B cell (primary cell): ENCODE measurements at regions of chr17 and their contacts with region 1.

Region 1: GRCh38 chr17:18141210-18141803 is 32.8 kb downstream of the MYO15A start:
- DNase-seq: peak; percentile 77
- ATAC-seq: peak; percentile 75
- H3K4me3 ChIP-seq: no peak overlapping the region
- H3K4me3 Mint-ChIP-seq: no peak overlapping the region
- H3K27ac ChIP-seq: no peak overlapping the region
- H3K27ac Mint-ChIP-seq: no peak overlapping the region
- H3K4me1 ChIP-seq: peaks cover 0 to 4% of the 10 kb centered on the region in 2 donors
- H3K4me1 Mint-ChIP-seq: peaks cover 5% of the 10 kb centered on the region
- H3K27me3 ChIP-seq: peaks cover 0 to 13% (median 1%) of the 10 kb centered on the region in 4 experiments
- H3K27me3 Mint-ChIP-seq: peaks cover 7% of the 10 kb centered on the region
- CTCF ChIP-seq: peak; percentile 81

Region 2: DNA sequence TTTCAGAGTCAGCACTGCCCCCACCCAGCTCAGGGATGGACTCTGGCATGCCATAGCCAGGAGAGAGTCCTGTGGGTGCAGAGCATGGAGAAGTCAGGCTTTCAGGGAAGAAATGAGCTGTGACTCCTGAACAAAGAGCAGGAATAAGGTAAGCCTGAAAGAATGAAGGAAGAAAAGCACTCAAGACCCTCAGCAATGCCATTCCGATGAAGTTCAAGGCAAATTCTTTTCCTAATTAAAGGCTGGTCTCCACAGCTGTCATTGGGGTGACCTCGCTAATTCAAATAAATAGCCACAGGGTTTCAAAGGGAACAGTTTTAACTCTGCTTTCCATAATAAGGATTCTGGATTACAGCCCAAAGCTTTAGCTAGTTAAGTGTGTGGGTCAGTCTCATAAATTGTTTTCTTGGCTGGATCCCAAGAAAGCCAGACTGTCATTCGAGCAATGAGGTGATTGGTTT is 200.8 kb before region 1 on chr17:
- CTCF ChIA-PET with region 1: no interaction called
- POLR2A ChIA-PET with region 1: no interaction called
- intact Hi-C with region 1: no loop called
- DNase-seq: no peak
- ATAC-seq: no peak
- H3K4me3 ChIP-seq: no peak overlapping the region
- H3K4me3 Mint-ChIP-seq: no peak overlapping the region
- H3K27ac ChIP-seq: no peak overlapping the region
- H3K27ac Mint-ChIP-seq: no peak overlapping the region
- H3K4me1 ChIP-seq: peaks cover 3 to 6% of the 10 kb centered on the region in 2 donors
- H3K4me1 Mint-ChIP-seq: peaks cover 14% of the 10 kb centered on the region
- H3K27me3 ChIP-seq: no peaks in the 10 kb centered on the region
- H3K27me3 Mint-ChIP-seq: no peaks in the 10 kb centered on the region
- CTCF ChIP-seq: no peak

Region 3: DNA sequence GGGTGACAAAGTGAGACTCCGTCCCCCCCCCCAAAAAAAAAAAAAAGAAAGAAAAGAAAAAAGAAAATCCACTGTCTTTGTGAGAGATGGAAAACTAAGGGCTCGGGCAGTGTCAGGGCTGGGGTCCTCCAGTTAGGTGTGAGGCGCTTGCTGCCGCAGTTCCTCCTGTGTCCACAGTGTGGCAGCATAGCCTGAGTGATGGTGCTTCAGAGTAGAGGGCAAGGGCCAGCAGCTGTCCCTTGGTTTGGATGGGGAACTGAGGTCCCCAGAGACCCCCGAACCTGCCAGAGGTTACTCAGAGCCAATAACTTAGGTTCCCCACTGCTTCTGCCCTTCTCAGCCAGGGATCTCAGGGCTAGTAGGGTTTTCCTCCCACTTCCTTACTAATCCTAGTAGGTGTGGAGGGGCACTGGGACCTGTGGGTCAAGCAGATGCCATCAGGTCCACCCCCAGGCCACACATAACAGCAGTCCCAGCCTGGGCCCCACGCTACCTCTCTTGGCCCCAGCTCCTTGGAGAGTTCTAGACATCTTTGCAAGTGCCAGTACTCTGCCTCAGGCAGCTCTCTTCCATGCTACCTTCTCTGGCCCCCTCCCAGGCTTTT is 76.2 kb after region 1 on chr17:
- CTCF ChIA-PET with region 1: interaction called, 4 read pairs
- POLR2A ChIA-PET with region 1: no interaction called
- intact Hi-C with region 1: loop called (anchors 1 kb)
- DNase-seq: peak; percentile 77
- ATAC-seq: peak; percentile 94
- H3K4me3 ChIP-seq: no peak overlapping the region
- H3K4me3 Mint-ChIP-seq: no peak overlapping the region
- H3K27ac ChIP-seq: no peak overlapping the region
- H3K27ac Mint-ChIP-seq: no peak overlapping the region
- H3K4me1 ChIP-seq: no peaks in the 10 kb centered on the region
- H3K4me1 Mint-ChIP-seq: peaks cover 3% of the 10 kb centered on the region
- H3K27me3 ChIP-seq: no peaks in the 10 kb centered on the region
- H3K27me3 Mint-ChIP-seq: no peaks in the 10 kb centered on the region
- CTCF ChIP-seq: peak; percentile 89